Naive thymus-derived CD4-positive, alpha-beta T cell (primary cell): ENCODE measurements at regions of chr15 and their contacts with region 1.

Region 1: GRCh38 chr15:101294731-101295606 is at the start of gene SNRPA1:
- DNase-seq: peak; percentile 92 to 99 (median 96)
- ATAC-seq: peak; percentile 94
- H3K4me3 ChIP-seq: peak within 1 kb of the TSS; percentile 76
- H3K4me3 Mint-ChIP-seq: peak within 1 kb of the TSS; percentile 90 to 99 (median 97)
- H3K27ac ChIP-seq: peak within 1 kb of the TSS; percentile 95
- H3K27ac Mint-ChIP-seq: peak within 1 kb of the TSS; percentile 89 to 99 (median 96)
- H3K4me1 ChIP-seq: peaks cover 14 to 27% of the 10 kb centered on the region in 2 donors
- H3K4me1 Mint-ChIP-seq: peaks cover 27 to 58% (median 47%) of the 10 kb centered on the region in 7 donors
- H3K27me3 ChIP-seq: no peaks in the 10 kb centered on the region
- H3K27me3 Mint-ChIP-seq: no peaks in the 10 kb centered on the region
- total RNA-seq, gene SNRPA1: 80.1 to 212 (median 110) TPM

Region 2: GRCh38 chr15:100191161-100191560 is 1103.8 kb before region 1 on chr15:
- CTCF ChIA-PET with region 1: no interaction called
- POLR2A ChIA-PET with region 1: no interaction called
- intact Hi-C with region 1: no loop called
- DNase-seq: no peak
- ATAC-seq: no peak
- H3K4me3 ChIP-seq: no peak overlapping the region
- H3K4me3 Mint-ChIP-seq: no peak overlapping the region
- H3K27ac ChIP-seq: no peak overlapping the region
- H3K27ac Mint-ChIP-seq: peak overlapping the region in 1 of 9 donors; percentile 47
- H3K4me1 ChIP-seq: no peaks in the 10 kb centered on the region
- H3K4me1 Mint-ChIP-seq: peaks cover 0 to 4% (median 0%) of the 10 kb centered on the region in 7 donors
- H3K27me3 ChIP-seq: no peaks in the 10 kb centered on the region
- H3K27me3 Mint-ChIP-seq: peaks cover 0 to 2% (median 0%) of the 10 kb centered on the region in 5 donors

Region 3: GRCh38 chr15:100349696-100350433 is 945.1 kb before region 1 on chr15:
- CTCF ChIA-PET with region 1: no interaction called
- POLR2A ChIA-PET with region 1: no interaction called
- intact Hi-C with region 1: loop called in 1 of 2 experiments (anchors 10 kb)
- DNase-seq: peak; percentile 74 to 90 (median 82)
- ATAC-seq: peak; percentile 98
- H3K4me3 ChIP-seq: peak overlapping the region; percentile 98
- H3K4me3 Mint-ChIP-seq: peak overlapping the region; percentile 89 to 97 (median 96)
- H3K27ac ChIP-seq: peak overlapping the region; percentile 79
- H3K27ac Mint-ChIP-seq: peak overlapping the region; percentile 77 to 95 (median 90)
- H3K4me1 ChIP-seq: peaks cover 0 to 12% of the 10 kb centered on the region in 2 donors
- H3K4me1 Mint-ChIP-seq: peaks cover 7 to 22% (median 14%) of the 10 kb centered on the region in 7 donors
- H3K27me3 ChIP-seq: peaks cover 0 to 4% of the 10 kb centered on the region in 2 donors
- H3K27me3 Mint-ChIP-seq: peaks cover 0 to 29% (median 14%) of the 10 kb centered on the region in 5 donors

Region 4: DNA sequence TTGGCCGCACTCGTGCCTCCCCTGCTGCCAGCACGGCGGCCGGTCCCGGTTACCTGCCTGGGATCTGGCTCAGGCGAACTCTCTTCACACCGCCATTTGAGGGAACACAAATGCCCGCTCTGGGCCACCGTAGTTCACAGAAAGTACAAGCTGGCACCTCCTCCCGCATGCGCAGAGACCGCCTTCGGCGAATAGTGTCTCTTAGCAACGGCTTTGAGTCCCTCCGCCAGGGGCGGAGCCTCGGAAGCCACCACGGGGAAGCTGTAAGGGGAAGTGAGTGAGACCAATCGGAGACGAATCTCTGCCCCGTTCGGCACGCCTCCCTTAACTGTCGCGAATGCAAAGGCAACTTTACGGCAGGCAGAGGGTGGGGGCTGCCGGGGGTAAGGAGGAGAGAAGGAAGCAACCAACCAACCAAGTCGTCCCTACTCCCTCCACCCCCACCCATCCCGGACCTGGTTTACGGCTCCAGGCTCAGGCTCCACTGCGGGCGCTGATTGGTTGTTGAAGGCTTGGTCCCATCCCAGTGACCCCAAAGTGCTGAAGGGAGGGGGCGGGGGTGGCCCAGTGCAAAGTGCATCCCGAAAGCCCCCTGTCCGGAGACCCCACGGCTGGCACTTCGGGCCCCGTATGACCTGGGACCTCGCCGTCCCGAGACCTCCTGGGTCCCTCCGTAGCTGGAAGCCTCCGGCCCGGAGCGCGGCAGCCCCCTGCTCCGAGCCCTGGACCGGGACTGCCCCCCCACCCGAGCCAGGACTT is 692.7 kb before region 1 on chr15 and contains the starts of genes ASB7 and LINS1:
- CTCF ChIA-PET with region 1: no interaction called
- POLR2A ChIA-PET with region 1: no interaction called
- intact Hi-C with region 1: loop called (anchors 1 kb)
- DNase-seq: peak; percentile 97 to 100 (median 100)
- ATAC-seq: peak; percentile 97
- H3K4me3 ChIP-seq: peak within 1 kb of the TSS; percentile 97
- H3K4me3 Mint-ChIP-seq: no peak within 1 kb of the TSS
- H3K27ac ChIP-seq: peak within 1 kb of the TSS; percentile 91
- H3K27ac Mint-ChIP-seq: peak within 1 kb of the TSS in 6 of 9 donors; percentile 50 to 95 (median 85)
- H3K4me1 ChIP-seq: peaks cover 35 to 52% of the 10 kb centered on the region in 2 donors
- H3K4me1 Mint-ChIP-seq: peaks cover 32 to 68% (median 41%) of the 10 kb centered on the region in 7 donors
- H3K27me3 ChIP-seq: no peaks in the 10 kb centered on the region
- H3K27me3 Mint-ChIP-seq: no peaks in the 10 kb centered on the region
- total RNA-seq, gene ASB7: 15.4 to 27.2 (median 18.9) TPM
- total RNA-seq, gene LINS1: 50.7 to 116 (median 76.9) TPM

Region 5: GRCh38 chr15:101277038-101277882 is 17.7 kb before region 1 on chr15 and contains the start of gene SELENOS:
- CTCF ChIA-PET with region 1: interaction called, 5 read pairs
- POLR2A ChIA-PET with region 1: interaction called, 8 read pairs
- intact Hi-C with region 1: loop called (anchors 1 kb)
- DNase-seq: peak; percentile 74 to 98 (median 84)
- ATAC-seq: peak; percentile 99
- H3K4me3 ChIP-seq: peak within 1 kb of the TSS; percentile 92
- H3K4me3 Mint-ChIP-seq: peak within 1 kb of the TSS; percentile 86 to 99 (median 95)
- H3K27ac ChIP-seq: peak within 1 kb of the TSS; percentile 88
- H3K27ac Mint-ChIP-seq: peak within 1 kb of the TSS; percentile 80 to 96 (median 91)
- H3K4me1 ChIP-seq: peaks cover 11 to 21% of the 10 kb centered on the region in 2 donors
- H3K4me1 Mint-ChIP-seq: peaks cover 13 to 37% (median 24%) of the 10 kb centered on the region in 7 donors
- H3K27me3 ChIP-seq: no peaks in the 10 kb centered on the region
- H3K27me3 Mint-ChIP-seq: no peaks in the 10 kb centered on the region
- total RNA-seq, gene SELENOS: 24.8 to 42.2 (median 37.6) TPM

Region 6: GRCh38 chr15:101333401-101333800 is 38.4 kb after region 1 on chr15:
- CTCF ChIA-PET with region 1: no interaction called
- POLR2A ChIA-PET with region 1: interaction called, 6 read pairs
- intact Hi-C with region 1: loop called in 1 of 2 experiments (anchors 1 kb)
- DNase-seq: no peak
- ATAC-seq: no peak
- H3K4me3 ChIP-seq: peak overlapping the region; percentile 14
- H3K4me3 Mint-ChIP-seq: peak overlapping the region in 3 of 10 donors; percentile 28 to 67 (median 38)
- H3K27ac ChIP-seq: peak overlapping the region; percentile 47
- H3K27ac Mint-ChIP-seq: peak overlapping the region in 8 of 9 donors; percentile 74 to 97 (median 90)
- H3K4me1 ChIP-seq: peaks cover 14 to 18% of the 10 kb centered on the region in 2 donors
- H3K4me1 Mint-ChIP-seq: peaks cover 0 to 28% (median 24%) of the 10 kb centered on the region in 7 donors
- H3K27me3 ChIP-seq: no peaks in the 10 kb centered on the region
- H3K27me3 Mint-ChIP-seq: peaks cover 0 to 8% (median 6%) of the 10 kb centered on the region in 5 donors

Region 7: GRCh38 chr15:101652098-101652782 is 357.3 kb after region 1 on chr15 and contains the start of gene TM2D3:
- CTCF ChIA-PET with region 1: interaction called, 3 read pairs
- POLR2A ChIA-PET with region 1: interaction called, 9 read pairs
- intact Hi-C with region 1: loop called (anchors 1 kb)
- DNase-seq: peak; percentile 92 to 98 (median 96)
- ATAC-seq: peak; percentile 96
- H3K4me3 ChIP-seq: peak within 1 kb of the TSS; percentile 99
- H3K4me3 Mint-ChIP-seq: peak within 1 kb of the TSS; percentile 88 to 95 (median 94)
- H3K27ac ChIP-seq: peak within 1 kb of the TSS; percentile 91
- H3K27ac Mint-ChIP-seq: peak within 1 kb of the TSS; percentile 87 to 98 (median 96)
- H3K4me1 ChIP-seq: peaks cover 19 to 26% of the 10 kb centered on the region in 2 donors
- H3K4me1 Mint-ChIP-seq: peaks cover 16 to 53% (median 35%) of the 10 kb centered on the region in 7 donors
- H3K27me3 ChIP-seq: no peaks in the 10 kb centered on the region
- H3K27me3 Mint-ChIP-seq: no peaks in the 10 kb centered on the region
- total RNA-seq, gene TM2D3: 54.4 to 105 (median 87.9) TPM